ENCODE measurements at regions of chr16 and their contacts with region 1.

Region 1: GRCh38 chr16:86252596-86252995 is 257.7 kb upstream of the FOXF1 start:
- DNase-seq: peak; percentile 20
- H3K4me3 Mint-ChIP-seq: no peak overlapping the region
- H3K27ac Mint-ChIP-seq: no peak overlapping the region
- H3K4me1 Mint-ChIP-seq: no peaks in the 10 kb centered on the region
- H3K27me3 Mint-ChIP-seq: peaks cover 87% of the 10 kb centered on the region
- CTCF ChIP-seq: peak; percentile 53

Region 2: GRCh38 chr16:86143666-86144065 is 108.9 kb before region 1 on chr16:
- CTCF ChIA-PET with region 1: interaction called, 12 read pairs
- intact Hi-C with region 1: no loop called
- DNase-seq: no peak
- H3K4me3 Mint-ChIP-seq: no peak overlapping the region
- H3K27ac Mint-ChIP-seq: no peak overlapping the region
- H3K4me1 Mint-ChIP-seq: no peaks in the 10 kb centered on the region
- H3K27me3 Mint-ChIP-seq: peaks cover 62% of the 10 kb centered on the region
- CTCF ChIP-seq: no peak

Measured in Calu3 (cell line).